ENCODE measurements at regions of chr12 and their contacts with region 1.

Region 1: GRCh38 chr12:54285150-54286041 is 4.9 kb downstream of the HNRNPA1 start:
- DNase-seq: no peak
- ATAC-seq: no peak
- H3K4me3 Mint-ChIP-seq: peak overlapping the region; percentile 7
- H3K27ac Mint-ChIP-seq: no peak overlapping the region
- H3K4me1 Mint-ChIP-seq: peaks cover 73% of the 10 kb centered on the region
- H3K27me3 Mint-ChIP-seq: no peaks in the 10 kb centered on the region
- CTCF ChIP-seq: no peak

Region 2: DNA sequence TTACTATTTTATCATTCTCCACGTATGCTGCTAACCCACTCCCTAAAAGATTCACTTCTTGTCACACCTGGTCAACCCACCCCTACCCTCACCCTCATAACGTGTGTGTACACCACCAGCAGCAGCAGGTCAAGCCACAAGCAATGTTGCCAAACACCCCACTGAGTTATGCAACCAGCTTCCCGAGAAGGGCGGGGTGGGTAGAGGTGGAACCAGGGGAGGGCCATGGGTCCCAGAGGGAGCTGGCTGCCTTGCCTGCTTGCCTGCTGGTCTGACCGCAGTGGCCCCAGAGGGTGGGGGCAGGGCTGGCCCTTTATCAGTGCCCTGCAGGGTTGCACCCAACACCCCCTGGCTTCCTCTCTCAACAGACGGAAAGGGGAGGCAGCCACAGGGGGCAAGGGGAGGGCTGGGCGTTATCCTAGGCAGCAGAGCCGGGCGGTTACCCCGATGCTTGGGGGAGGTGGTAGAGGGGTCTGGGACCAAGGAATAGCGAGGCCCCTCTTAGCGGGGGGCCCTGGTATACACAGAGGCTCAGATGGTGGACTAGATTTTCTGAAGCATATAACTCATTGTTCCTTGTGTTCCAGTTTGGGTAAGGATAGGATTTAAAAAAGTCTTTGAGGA is 18.9 kb after region 1 on chr12:
- CTCF ChIA-PET with region 1: no interaction called
- POLR2A ChIA-PET with region 1: interaction called, 12 read pairs
- intact Hi-C with region 1: loop called (anchors 2 kb)
- DNase-seq: peak; percentile 54
- ATAC-seq: peak; percentile 94
- H3K4me3 Mint-ChIP-seq: peak overlapping the region; percentile 69
- H3K27ac Mint-ChIP-seq: no peak overlapping the region
- H3K4me1 Mint-ChIP-seq: peaks cover 36% of the 10 kb centered on the region
- H3K27me3 Mint-ChIP-seq: peaks cover 37% of the 10 kb centered on the region
- CTCF ChIP-seq: no peak

Region 3: GRCh38 chr12:54603173-54603814 is 317.9 kb after region 1 on chr12:
- CTCF ChIA-PET with region 1: no interaction called
- POLR2A ChIA-PET with region 1: no interaction called
- intact Hi-C with region 1: no loop called
- DNase-seq: no peak
- ATAC-seq: peak; percentile 85
- H3K4me3 Mint-ChIP-seq: no peak overlapping the region
- H3K27ac Mint-ChIP-seq: no peak overlapping the region
- H3K4me1 Mint-ChIP-seq: peaks cover 2% of the 10 kb centered on the region
- H3K27me3 Mint-ChIP-seq: peaks cover 7% of the 10 kb centered on the region
- CTCF ChIP-seq: peak; percentile 71